Breast epithelium (tissue), 4 donors: ENCODE measurements at regions of chr22 and their contacts with region 1.

Region 1: DNA sequence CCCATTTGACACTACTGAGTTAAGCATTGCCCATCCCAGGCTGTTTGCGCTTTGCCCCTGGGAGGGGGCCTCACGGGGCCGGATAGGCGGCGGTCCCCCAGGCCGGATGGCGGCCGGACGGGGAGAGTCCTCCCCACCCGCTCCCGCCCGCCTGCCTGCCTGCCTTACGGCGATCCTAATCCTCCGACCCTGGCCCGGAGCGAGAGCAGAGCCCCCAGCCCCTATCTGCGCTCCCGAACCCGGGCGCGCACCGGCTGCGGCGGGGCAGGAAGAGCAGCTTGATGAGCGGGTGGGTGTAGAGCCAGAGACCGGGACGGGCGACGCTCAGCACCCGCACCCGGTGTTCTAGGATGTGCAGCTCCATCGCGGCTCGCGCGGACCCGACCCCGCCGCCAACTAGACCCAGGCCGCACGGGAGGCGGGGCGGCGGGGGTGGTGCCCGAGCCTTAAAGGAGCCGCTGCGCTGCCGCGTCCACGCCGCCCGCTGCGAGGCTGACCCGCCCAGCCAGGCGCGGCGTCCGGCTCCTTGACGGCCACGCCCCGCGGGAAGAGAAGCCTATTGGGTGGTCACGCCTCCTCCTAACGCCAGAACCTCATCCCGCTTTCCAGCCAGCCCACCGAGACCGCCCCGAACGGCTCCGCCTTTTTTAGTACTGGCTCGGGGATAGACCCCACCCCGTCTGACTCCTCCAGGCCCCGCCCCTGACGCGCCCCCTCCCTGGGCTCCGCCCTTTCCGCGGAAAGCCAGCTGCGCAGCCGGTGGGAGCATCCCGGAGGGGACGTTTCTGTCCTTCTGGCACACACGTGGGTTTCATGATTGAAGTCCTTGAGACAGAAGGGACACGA is at the start of gene CASTOR1:
- DNase-seq: peak; percentile 98 to 99
- H3K4me3 ChIP-seq: peak within 1 kb of the TSS; percentile 84 to 94 (median 92)
- H3K27ac ChIP-seq: peak within 1 kb of the TSS; percentile 96 to 98
- H3K4me1 ChIP-seq: peaks cover 16 to 28% of the 10 kb centered on the region in 2 donors
- H3K27me3 ChIP-seq: no peaks in the 10 kb centered on the region
- CTCF ChIP-seq: no peak
- POLR2A ChIP-seq: no peak
- total RNA-seq, gene CASTOR1: 15.5 to 26.6 (median 20.6) TPM

Region 2: GRCh38 chr22:30321461-30321860 is 32.1 kb after region 1 on chr22:
- intact Hi-C with region 1: loop called (anchors 1 kb)
- DNase-seq: no peak
- H3K4me3 ChIP-seq: no peak overlapping the region
- H3K27ac ChIP-seq: peak overlapping the region; percentile 6 to 45
- H3K4me1 ChIP-seq: peaks cover 6 to 23% of the 10 kb centered on the region in 2 donors
- H3K27me3 ChIP-seq: no peaks in the 10 kb centered on the region
- CTCF ChIP-seq: no peak
- POLR2A ChIP-seq: no peak

Region 3: GRCh38 chr22:30390974-30391691 is 101.8 kb after region 1 on chr22:
- intact Hi-C with region 1: loop called (anchors 1 kb)
- DNase-seq: peak; percentile 67 to 80
- H3K4me3 ChIP-seq: no peak overlapping the region
- H3K27ac ChIP-seq: no peak overlapping the region
- H3K4me1 ChIP-seq: peaks cover 1 to 3% of the 10 kb centered on the region in 2 donors
- H3K27me3 ChIP-seq: no peaks in the 10 kb centered on the region
- CTCF ChIP-seq: peak; percentile 75 to 89 (median 76)
- POLR2A ChIP-seq: no peak

Region 4: GRCh38 chr22:30733181-30733631 is 443.8 kb after region 1 on chr22:
- intact Hi-C with region 1: no loop called
- DNase-seq: no peak
- H3K4me3 ChIP-seq: no peak overlapping the region
- H3K27ac ChIP-seq: no peak overlapping the region
- H3K4me1 ChIP-seq: no peaks in the 10 kb centered on the region
- H3K27me3 ChIP-seq: no peaks in the 10 kb centered on the region
- CTCF ChIP-seq: no peak
- POLR2A ChIP-seq: no peak